Motor neuron (in vitro differentiated cells): ENCODE measurements at regions of chr1 and their contacts with region 1.

Region 1: GRCh38 chr1:150235852-150236613 is at the start of gene ANP32E:
- ATAC-seq: peak; percentile 84 to 97 (median 96)
- H3K4me3 ChIP-seq: peak within 1 kb of the TSS; percentile 38 to 70 (median 57)
- H3K27ac ChIP-seq: peak within 1 kb of the TSS; percentile 13 to 74
- H3K4me1 ChIP-seq: peaks cover 4 to 5% of the 10 kb centered on the region in 2 donors
- total RNA-seq, gene ANP32E: 34.6 to 147 (median 54.7) TPM

Region 2: DNA sequence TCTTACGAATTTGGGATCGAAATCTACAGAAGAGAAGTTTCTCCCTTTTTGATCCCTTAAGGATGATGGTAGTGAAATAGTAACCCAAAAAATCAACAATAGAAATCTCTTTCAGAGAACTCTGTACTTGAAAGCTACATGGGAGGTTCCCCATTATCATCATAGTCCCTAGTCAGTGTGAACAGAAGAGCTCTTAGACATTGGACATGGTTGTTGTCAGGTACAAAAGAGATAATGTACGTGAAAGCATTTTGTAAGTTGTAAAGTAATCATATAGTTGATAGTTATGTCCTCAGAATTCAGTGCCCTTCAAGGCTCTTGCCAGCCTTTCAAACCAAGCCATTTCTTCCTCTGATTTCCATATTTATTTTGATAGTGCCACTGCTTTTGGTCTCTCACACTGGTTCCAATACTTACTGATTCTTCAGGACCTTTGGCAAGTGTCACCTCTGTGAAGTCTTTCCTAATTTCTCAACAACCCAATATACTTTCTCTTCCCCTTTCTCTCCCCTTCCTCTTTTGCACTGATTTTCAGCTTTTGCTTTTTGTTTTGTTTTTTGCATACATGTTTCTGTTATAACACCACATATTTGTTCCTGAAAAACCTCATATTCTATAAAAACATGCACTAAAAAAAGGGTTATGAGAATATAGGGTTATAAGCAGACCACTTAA is 146.1 kb before region 1 on chr1:
- in situ Hi-C with region 1: no loop called
- ATAC-seq: no peak
- H3K4me3 ChIP-seq: no peak overlapping the region
- H3K27ac ChIP-seq: no peak overlapping the region
- H3K4me1 ChIP-seq: no peaks in the 10 kb centered on the region

Region 3: GRCh38 chr1:150293433-150294168 is 57.6 kb after region 1 on chr1 and contains the start of gene MRPS21:
- in situ Hi-C with region 1: loop called in 2 of 9 experiments (anchors 10 kb)
- ATAC-seq: peak; percentile 98 to 100 (median 100)
- H3K4me3 ChIP-seq: peak within 1 kb of the TSS; percentile 59 to 100 (median 82)
- H3K27ac ChIP-seq: peak within 1 kb of the TSS; percentile 88 to 89
- H3K4me1 ChIP-seq: peaks cover 19 to 20% of the 10 kb centered on the region in 2 donors
- total RNA-seq, gene MRPS21: 104 to 198 (median 121) TPM

Region 4: DNA sequence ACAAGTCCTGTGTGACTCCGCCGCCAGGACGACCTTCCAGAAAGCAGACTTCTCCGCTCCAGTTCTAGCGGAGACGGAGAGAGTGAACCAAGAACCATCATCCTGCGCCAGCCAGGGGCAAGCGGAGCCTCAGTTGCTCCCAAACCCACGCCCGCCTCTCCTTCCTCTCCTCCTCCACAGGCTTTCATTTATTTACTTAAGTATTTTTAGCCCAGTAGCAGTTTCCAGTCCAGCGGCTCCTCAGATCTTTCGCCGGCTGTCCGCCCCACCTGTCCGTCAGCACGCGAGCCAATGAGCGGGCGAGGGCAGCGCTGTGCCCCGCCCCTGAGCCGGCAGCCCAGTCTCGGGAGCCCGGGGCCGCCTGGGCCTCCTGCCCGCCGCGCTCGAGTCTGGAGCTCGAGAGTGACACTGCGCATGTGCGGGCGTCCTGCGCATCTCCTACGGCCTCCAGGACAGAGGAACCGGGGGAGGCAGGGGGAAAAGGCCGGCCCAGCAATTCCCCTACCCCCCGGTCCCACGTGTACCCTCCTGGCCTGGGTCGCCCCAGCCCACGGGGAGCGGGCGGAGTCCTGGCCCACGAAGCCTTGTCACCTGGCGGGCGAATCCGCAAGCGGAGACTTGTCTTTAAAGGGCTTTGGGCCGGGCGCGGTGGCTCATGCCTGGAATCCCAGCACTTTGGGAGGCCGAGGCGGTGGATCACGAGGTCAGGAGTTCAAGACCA is 279.5 kb after region 1 on chr1 and contains the start of gene FALEC:
- in situ Hi-C with region 1: no loop called
- ATAC-seq: peak; percentile 79 to 97 (median 95)
- H3K4me3 ChIP-seq: peak within 1 kb of the TSS; percentile 52 to 76 (median 63)
- H3K27ac ChIP-seq: peak within 1 kb of the TSS; percentile 61 to 68
- H3K4me1 ChIP-seq: peaks cover 0 to 6% of the 10 kb centered on the region in 2 donors
- total RNA-seq, gene FALEC: 0.57 to 4.1 (median 2.1) TPM